WTC11 (cell line): ENCODE measurements at regions of chr1 and their contacts with region 1.

Region 1: GRCh38 chr1:15128520-15129313 is 24.8 kb upstream of the TMEM51 start:
- DNase-seq: peak; percentile 89
- ATAC-seq: peak; percentile 98
- H3K4me3 Mint-ChIP-seq: no peak overlapping the region
- H3K27ac Mint-ChIP-seq: no peak overlapping the region
- H3K4me1 Mint-ChIP-seq: peaks cover 3% of the 10 kb centered on the region; the same call in 1 of the 2 replicates
- H3K27me3 Mint-ChIP-seq: peaks cover 6% of the 10 kb centered on the region
- CTCF ChIP-seq: peak; percentile 85

Region 2: GRCh38 chr1:15116966-15117365 is 11.8 kb before region 1 on chr1:
- CTCF ChIA-PET with region 1: interaction called, 20 read pairs
- POLR2A ChIA-PET with region 1: no interaction called
- DNase-seq: no peak
- ATAC-seq: no peak
- H3K4me3 Mint-ChIP-seq: no peak overlapping the region
- H3K27ac Mint-ChIP-seq: no peak overlapping the region
- H3K4me1 Mint-ChIP-seq: peaks cover 12% of the 10 kb centered on the region
- H3K27me3 Mint-ChIP-seq: no peaks in the 10 kb centered on the region
- CTCF ChIP-seq: no peak

Region 3: DNA sequence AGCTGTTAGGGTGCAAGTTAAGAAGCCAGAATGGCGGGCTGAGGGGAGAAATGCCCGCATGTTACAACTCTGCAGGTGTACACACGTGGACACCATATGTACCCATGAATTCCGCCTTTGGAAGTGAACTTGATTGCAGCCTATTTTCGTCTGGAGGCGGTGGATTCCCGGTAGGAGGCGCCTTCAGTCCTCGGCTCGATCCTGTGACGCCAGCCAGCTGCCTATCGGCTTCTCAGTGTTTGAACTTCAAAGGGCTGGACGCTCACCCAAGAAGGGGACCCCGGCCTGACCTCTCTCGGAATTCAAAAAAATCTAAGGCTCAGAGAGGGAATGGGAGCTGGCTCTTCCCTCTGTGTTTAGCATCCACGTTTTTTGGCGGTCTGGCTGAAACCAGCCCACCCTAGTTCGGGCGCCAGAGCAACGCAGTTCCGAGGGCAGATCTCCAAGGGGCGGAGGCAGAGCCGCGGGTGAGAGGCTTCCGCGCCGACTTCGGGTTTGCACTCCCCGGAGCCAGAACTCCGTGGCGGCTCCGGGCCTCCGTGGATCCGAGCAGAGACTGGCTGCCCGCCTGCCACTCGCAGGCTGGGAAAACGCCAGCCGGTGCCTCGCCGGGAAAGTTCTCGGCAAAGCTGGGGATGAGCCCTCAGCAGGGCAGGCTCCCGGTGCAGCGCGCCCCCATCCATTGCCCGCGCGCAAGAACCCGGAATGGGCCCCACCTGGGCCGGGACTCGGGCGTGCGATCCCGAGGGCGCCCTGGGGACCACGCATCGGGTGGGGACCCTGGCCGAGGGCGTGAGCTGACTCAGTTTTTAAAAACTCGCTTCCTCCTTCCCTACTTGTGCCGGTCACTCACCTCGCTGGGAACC is 23.8 kb after region 1 on chr1:
- CTCF ChIA-PET with region 1: interaction called, 34 read pairs
- POLR2A ChIA-PET with region 1: interaction called, 3 read pairs
- DNase-seq: peak; percentile 83
- ATAC-seq: peak; percentile 25
- H3K4me3 Mint-ChIP-seq: peak overlapping the region; percentile 94
- H3K27ac Mint-ChIP-seq: peak overlapping the region; percentile 82; the same call in 1 of the 2 replicates
- H3K4me1 Mint-ChIP-seq: peaks cover 41% of the 10 kb centered on the region
- H3K27me3 Mint-ChIP-seq: peaks cover 26% of the 10 kb centered on the region
- CTCF ChIP-seq: no peak

Region 4: GRCh38 chr1:15272009-15272788 is 143.5 kb after region 1 on chr1:
- CTCF ChIA-PET with region 1: interaction called, 51 read pairs
- POLR2A ChIA-PET with region 1: interaction called, 4 read pairs
- DNase-seq: peak; percentile 69
- ATAC-seq: peak; percentile 99
- H3K4me3 Mint-ChIP-seq: peak overlapping the region; percentile 49
- H3K27ac Mint-ChIP-seq: no peak overlapping the region
- H3K4me1 Mint-ChIP-seq: peaks cover 9% of the 10 kb centered on the region
- H3K27me3 Mint-ChIP-seq: peaks cover 6% of the 10 kb centered on the region
- CTCF ChIP-seq: peak; percentile 66; the same call in 1 of the 2 replicates

Region 5: DNA sequence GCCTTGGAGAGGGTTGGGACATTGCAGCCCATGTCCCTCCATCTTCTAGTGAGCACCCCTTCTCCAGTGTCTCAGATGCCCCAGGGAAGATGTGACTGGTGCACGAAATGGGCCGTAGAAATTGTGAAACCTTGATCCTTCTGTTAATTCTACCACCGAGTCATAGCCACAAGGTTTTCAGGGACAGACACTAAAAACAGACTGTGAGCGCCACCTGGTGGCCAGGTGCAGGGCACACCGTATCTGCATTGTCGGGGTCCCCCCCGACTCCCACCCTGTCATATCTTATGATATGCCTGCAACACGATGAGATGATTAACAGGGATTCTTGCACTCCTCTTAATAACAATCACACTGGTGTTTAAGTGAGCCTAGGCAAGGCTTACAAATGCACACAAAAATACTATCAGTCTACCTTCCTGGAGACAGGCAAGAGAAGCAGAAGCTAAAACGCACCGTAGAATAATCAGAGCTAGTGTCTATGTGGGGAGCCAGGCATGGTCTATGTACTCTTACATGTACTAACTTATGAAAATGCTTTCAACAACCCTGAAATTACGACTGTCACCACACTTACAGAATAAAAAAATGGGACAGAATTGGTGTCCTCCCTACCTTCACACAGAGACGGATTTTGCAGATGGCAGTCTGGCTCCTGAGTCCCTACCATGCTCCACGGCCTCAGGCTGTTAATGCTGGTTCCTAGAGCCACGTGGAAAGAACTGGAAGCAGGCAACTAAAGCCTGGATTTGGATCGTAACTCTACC is 176.2 kb after region 1 on chr1:
- CTCF ChIA-PET with region 1: interaction called, 33 read pairs
- POLR2A ChIA-PET with region 1: no interaction called
- DNase-seq: peak; percentile 87
- ATAC-seq: peak; percentile 90
- H3K4me3 Mint-ChIP-seq: no peak overlapping the region
- H3K27ac Mint-ChIP-seq: no peak overlapping the region
- H3K4me1 Mint-ChIP-seq: no peaks in the 10 kb centered on the region
- H3K27me3 Mint-ChIP-seq: peaks cover 12% of the 10 kb centered on the region
- CTCF ChIP-seq: peak; percentile 92